CD8-positive, alpha-beta T cell (primary cell): ENCODE measurements at regions of chr1 and their contacts with region 1.

Region 1: DNA sequence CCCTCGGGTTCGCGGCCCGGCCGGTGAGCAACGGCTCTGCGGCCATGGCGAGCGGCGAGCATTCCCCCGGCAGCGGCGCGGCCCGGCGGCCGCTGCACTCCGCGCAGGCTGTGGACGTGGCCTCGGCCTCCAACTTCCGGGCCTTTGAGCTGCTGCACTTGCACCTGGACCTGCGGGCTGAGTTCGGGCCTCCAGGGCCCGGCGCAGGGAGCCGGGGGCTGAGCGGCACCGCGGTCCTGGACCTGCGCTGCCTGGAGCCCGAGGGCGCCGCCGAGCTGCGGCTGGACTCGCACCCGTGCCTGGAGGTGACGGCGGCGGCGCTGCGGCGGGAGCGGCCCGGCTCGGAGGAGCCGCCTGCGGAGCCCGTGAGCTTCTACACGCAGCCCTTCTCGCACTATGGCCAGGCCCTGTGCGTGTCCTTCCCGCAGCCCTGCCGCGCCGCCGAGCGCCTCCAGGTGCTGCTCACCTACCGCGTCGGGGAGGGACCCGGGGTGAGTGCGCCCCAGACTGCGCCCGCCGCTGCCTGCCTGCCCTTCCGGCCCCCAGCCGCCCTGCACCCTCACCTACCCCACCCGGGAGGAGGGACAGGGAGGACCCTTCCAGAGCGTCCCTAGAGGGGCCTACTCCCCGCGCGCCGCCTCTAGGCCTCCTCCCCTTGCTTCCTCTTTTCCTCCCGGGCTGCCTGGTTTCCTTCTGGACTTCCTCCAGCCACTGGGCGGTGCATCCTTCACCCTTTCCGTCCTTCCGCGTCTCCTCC is at the start of gene RNPEP:
- DNase-seq: peak; percentile 22 to 75 (median 59)
- ATAC-seq: peak; percentile 80
- H3K4me3 ChIP-seq: peak within 1 kb of the TSS; percentile 64 to 65
- H3K4me3 Mint-ChIP-seq: peak within 1 kb of the TSS; percentile 96
- H3K27ac ChIP-seq: peak within 1 kb of the TSS; percentile 53 to 66
- H3K27ac Mint-ChIP-seq: peak within 1 kb of the TSS; percentile 92
- H3K4me1 ChIP-seq: peaks cover 16% of the 10 kb centered on the region
- H3K4me1 Mint-ChIP-seq: peaks cover 32% of the 10 kb centered on the region
- H3K27me3 ChIP-seq: no peaks in the 10 kb centered on the region
- H3K27me3 Mint-ChIP-seq: peaks cover 2% of the 10 kb centered on the region
- CTCF ChIP-seq: no peak
- total RNA-seq, gene RNPEP: 16.8 to 21.1 TPM

Region 2: DNA sequence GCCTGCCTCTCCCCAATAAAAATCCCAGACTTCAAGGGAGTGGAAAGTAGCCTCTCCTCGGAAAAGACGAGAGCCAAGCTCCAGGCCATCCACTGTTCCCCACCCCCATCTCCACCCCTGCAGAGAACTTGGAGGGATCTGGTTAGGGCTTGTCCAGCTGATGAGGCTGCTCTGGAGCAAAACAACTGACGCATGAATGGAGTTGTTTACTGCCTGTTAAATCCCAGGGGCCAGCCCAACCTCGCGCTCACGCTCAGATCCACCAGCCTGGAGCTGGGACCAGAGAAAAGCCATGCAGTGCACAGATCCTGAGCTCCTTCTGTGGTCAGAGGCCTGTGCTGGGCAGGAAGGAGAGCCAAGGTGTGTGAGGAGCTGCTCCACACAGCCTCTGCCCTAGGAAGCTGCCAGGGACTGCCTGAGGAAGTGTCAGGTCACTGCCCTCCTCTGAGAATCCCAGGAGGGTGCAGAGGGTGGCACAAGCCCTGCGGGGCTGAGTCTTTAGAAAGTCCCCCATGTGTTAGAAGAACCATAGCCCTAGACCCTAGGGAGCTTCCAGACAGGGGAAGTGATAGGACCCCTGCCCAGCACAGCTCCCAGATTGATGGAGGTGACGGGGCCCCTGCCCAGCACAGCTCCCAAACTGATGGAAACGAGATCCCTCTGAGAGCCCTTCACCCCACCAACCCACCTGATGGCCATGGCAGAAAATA is 262.8 kb before region 1 on chr1:
- CTCF ChIA-PET with region 1: no interaction called
- POLR2A ChIA-PET with region 1: no interaction called
- intact Hi-C with region 1: no loop called
- DNase-seq: no peak
- ATAC-seq: no peak
- H3K4me3 ChIP-seq: no peak overlapping the region
- H3K4me3 Mint-ChIP-seq: no peak overlapping the region
- H3K27ac ChIP-seq: no peak overlapping the region
- H3K27ac Mint-ChIP-seq: no peak overlapping the region
- H3K4me1 ChIP-seq: no peaks in the 10 kb centered on the region
- H3K4me1 Mint-ChIP-seq: no peaks in the 10 kb centered on the region
- H3K27me3 ChIP-seq: no peaks in the 10 kb centered on the region
- H3K27me3 Mint-ChIP-seq: peaks cover 6% of the 10 kb centered on the region
- CTCF ChIP-seq: no peak

Region 3: DNA sequence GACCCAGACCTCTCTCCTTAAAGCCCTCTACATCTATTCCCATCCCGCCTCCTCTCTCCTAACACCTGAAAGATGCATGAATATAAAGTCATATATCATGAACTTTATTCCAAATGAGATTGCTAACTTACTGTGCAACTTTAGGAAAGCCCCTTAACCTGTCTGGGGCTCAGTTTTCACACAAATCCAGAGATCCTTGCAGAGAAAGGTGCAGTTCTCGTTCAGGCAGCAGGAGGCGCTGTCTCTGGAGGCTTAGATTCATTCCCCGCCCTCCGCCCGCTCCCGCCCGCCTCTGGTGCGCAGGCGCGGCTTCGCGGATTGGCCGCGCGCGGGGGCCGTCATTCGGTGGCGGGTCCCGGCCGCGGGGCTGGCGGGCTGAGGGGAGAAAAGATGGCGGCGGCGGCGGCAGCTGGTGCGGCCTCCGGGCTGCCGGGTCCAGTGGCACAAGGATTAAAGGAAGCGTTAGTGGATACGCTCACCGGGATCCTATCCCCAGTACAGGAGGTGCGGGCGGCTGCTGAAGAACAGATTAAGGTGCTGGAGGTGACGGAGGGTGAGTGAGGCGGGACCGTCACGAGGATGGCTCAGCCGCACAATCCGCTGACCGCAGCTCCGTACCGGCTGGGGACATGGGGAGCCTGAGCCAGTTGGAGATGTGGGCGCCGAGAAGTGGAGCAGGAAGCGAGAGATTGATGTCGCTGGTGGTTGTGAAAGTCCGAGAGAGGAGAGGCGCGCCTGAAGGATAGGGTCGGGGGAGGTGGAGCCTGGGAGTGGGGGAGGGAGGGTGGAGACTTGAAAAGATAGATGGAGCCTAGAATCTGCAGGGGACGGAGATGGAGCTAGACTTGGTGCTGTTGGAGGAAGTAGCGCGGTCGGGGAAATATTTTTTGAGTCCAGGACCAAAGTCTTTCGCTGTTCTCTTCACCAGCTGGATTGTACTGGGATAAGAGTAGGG is 153.7 kb before region 1 on chr1 and contains the start of gene IPO9:
- CTCF ChIA-PET with region 1: no interaction called
- POLR2A ChIA-PET with region 1: no interaction called
- intact Hi-C with region 1: loop called in 1 of 2 experiments (anchors 5 kb)
- DNase-seq: peak; percentile 89 to 96 (median 95)
- ATAC-seq: peak; percentile 96
- H3K4me3 ChIP-seq: peak within 1 kb of the TSS; percentile 95 to 100
- H3K4me3 Mint-ChIP-seq: peak within 1 kb of the TSS; percentile 97
- H3K27ac ChIP-seq: peak within 1 kb of the TSS; percentile 90
- H3K27ac Mint-ChIP-seq: peak within 1 kb of the TSS; percentile 93
- H3K4me1 ChIP-seq: peaks cover 34% of the 10 kb centered on the region
- H3K4me1 Mint-ChIP-seq: peaks cover 42% of the 10 kb centered on the region
- H3K27me3 ChIP-seq: no peaks in the 10 kb centered on the region
- H3K27me3 Mint-ChIP-seq: no peaks in the 10 kb centered on the region
- CTCF ChIP-seq: peak; percentile 96
- total RNA-seq, gene IPO9: 14.4 to 19.2 TPM

Region 4: GRCh38 chr1:201876148-201876818 is 106.5 kb before region 1 on chr1:
- CTCF ChIA-PET with region 1: no interaction called
- POLR2A ChIA-PET with region 1: no interaction called
- intact Hi-C with region 1: no loop called
- DNase-seq: no peak
- ATAC-seq: no peak
- H3K4me3 ChIP-seq: no peak overlapping the region
- H3K4me3 Mint-ChIP-seq: no peak overlapping the region
- H3K27ac ChIP-seq: no peak overlapping the region
- H3K27ac Mint-ChIP-seq: peak overlapping the region; percentile 2
- H3K4me1 ChIP-seq: no peaks in the 10 kb centered on the region
- H3K4me1 Mint-ChIP-seq: no peaks in the 10 kb centered on the region
- H3K27me3 ChIP-seq: no peaks in the 10 kb centered on the region
- H3K27me3 Mint-ChIP-seq: no peaks in the 10 kb centered on the region
- CTCF ChIP-seq: no peak

Region 5: DNA sequence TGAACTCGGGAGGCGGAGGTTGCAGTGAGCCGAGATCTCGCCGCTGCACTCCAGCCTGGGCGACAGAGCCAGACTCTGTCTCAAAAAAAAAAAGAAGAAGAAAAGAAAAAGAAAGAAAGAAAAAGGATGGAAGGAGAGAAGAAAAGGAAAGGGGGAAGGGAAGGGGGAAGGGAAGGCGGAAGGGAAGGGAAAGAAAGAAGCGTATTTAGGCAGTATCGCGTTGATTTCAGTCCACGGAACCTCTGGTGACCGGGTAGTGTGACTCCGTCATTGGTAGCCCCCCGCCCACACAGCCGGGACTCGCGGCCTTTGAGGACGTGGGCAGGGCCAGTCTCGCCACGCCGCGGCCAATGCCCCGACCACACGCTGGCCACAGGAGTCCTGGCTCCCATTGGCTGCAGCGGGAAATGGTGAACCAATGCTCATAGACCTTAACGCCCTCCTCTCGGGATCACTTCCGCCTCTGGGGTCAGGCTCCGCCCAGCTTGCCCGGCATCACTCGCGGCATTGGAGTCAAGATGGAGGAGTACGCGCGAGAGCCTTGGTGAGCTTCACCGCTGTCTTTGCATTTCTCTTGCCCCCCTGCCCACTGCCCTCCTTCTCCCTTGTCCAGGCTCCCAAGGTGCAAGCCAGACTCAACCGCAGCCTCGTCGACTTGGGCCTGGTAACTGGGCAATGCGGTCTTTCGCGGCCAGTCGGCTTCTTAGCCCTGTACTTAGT is 27.6 kb before region 1 on chr1 and contains the start of gene TIMM17A:
- CTCF ChIA-PET with region 1: interaction called, 3 read pairs
- POLR2A ChIA-PET with region 1: no interaction called
- intact Hi-C with region 1: loop called (anchors 1 kb)
- DNase-seq: peak; percentile 82 to 96 (median 93)
- ATAC-seq: peak; percentile 99
- H3K4me3 ChIP-seq: peak within 1 kb of the TSS; percentile 91 to 98
- H3K4me3 Mint-ChIP-seq: peak within 1 kb of the TSS; percentile 98
- H3K27ac ChIP-seq: peak within 1 kb of the TSS; percentile 86 to 94
- H3K27ac Mint-ChIP-seq: peak within 1 kb of the TSS; percentile 96
- H3K4me1 ChIP-seq: peaks cover 13% of the 10 kb centered on the region
- H3K4me1 Mint-ChIP-seq: peaks cover 31% of the 10 kb centered on the region
- H3K27me3 ChIP-seq: no peaks in the 10 kb centered on the region
- H3K27me3 Mint-ChIP-seq: no peaks in the 10 kb centered on the region
- CTCF ChIP-seq: no peak
- total RNA-seq, gene TIMM17A: 58.0 to 66.6 TPM

Region 6: GRCh38 chr1:201999625-202000238 is 16.9 kb after region 1 on chr1:
- CTCF ChIA-PET with region 1: interaction called, 31 read pairs
- POLR2A ChIA-PET with region 1: interaction called, 5 read pairs
- intact Hi-C with region 1: no loop called
- DNase-seq: peak in 4 of 9 experiments; percentile 10 to 58 (median 34)
- ATAC-seq: peak; percentile 83
- H3K4me3 ChIP-seq: no peak overlapping the region
- H3K4me3 Mint-ChIP-seq: no peak overlapping the region
- H3K27ac ChIP-seq: no peak overlapping the region
- H3K27ac Mint-ChIP-seq: no peak overlapping the region
- H3K4me1 ChIP-seq: no peaks in the 10 kb centered on the region
- H3K4me1 Mint-ChIP-seq: no peaks in the 10 kb centered on the region
- H3K27me3 ChIP-seq: no peaks in the 10 kb centered on the region
- H3K27me3 Mint-ChIP-seq: no peaks in the 10 kb centered on the region
- CTCF ChIP-seq: peak; percentile 71